ENCODE measurements at regions of chr10 and their contacts with region 1.

Region 1: GRCh38 chr10:4034907-4035598 is 250.0 kb upstream of the KLF6 start:
- DNase-seq: no peak
- ATAC-seq: peak; percentile 50
- H3K4me3 ChIP-seq: peak overlapping the region in 1 of 2 donors; percentile 52
- H3K27ac ChIP-seq: peak overlapping the region; percentile 29 to 74
- H3K4me1 ChIP-seq: no peaks in the 10 kb centered on the region
- H3K27me3 ChIP-seq: no peaks in the 10 kb centered on the region

Region 2: GRCh38 chr10:3955493-3955892 is 79.6 kb before region 1 on chr10:
- intact Hi-C with region 1: loop called in 1 of 2 experiments (anchors 10 kb)
- DNase-seq: no peak
- ATAC-seq: no peak
- H3K4me3 ChIP-seq: no peak overlapping the region
- H3K27ac ChIP-seq: peak overlapping the region in 1 of 2 donors; percentile 26
- H3K4me1 ChIP-seq: no peaks in the 10 kb centered on the region
- H3K27me3 ChIP-seq: no peaks in the 10 kb centered on the region

Region 3: DNA sequence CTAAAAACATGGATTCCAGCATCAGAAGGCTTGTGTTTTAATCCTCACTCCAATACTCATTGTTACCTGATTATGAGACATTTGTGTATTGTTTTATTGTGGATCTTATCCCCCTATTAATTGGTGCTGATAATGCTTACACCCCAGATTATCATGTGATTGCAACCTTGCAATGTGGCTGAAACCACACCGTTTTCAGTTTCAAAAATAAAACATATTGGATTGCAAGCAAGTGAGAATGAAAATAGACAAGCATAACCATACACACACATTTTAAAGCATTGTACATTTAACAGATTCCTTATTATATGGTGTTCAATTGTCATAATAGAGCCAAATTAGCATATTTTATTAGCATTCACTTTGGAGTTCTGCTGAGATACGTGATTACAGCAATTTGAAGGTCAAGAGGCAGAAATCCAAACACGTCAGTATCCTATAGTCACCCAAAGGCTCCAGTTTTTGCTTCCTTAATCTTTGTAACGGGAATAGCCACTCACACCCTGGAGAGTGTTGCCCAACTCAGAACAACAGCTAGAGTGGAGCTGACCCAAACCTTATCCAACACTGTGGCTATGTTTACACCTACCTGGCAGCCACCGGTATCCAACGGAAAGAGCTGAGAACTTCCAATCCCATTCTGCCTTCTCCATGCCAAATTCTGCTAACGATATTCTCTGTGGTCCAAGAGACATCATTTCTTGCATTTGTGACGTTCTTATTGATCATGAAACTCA is 67.0 kb after region 1 on chr10:
- intact Hi-C with region 1: no loop called
- DNase-seq: no peak
- ATAC-seq: no peak
- H3K4me3 ChIP-seq: no peak overlapping the region
- H3K27ac ChIP-seq: no peak overlapping the region
- H3K4me1 ChIP-seq: no peaks in the 10 kb centered on the region
- H3K27me3 ChIP-seq: no peaks in the 10 kb centered on the region